ENCODE measurements at regions of chr2 and their contacts with region 1.

Region 1: GRCh38 chr2:118003396-118003824 is 10.5 kb downstream of the CCDC93 start:
- DNase-seq: peak; percentile 88
- H3K4me3 ChIP-seq: no peak overlapping the region
- H3K27ac ChIP-seq: peak overlapping the region; percentile 42
- H3K4me1 ChIP-seq: no peaks in the 10 kb centered on the region
- H3K27me3 ChIP-seq: no peaks in the 10 kb centered on the region
- CTCF ChIP-seq: peak; percentile 74 to 76
- POLR2A ChIP-seq: no peak

Region 2: GRCh38 chr2:117785740-117786139 is 217.7 kb before region 1 on chr2:
- CTCF ChIA-PET with region 1: interaction called, 10 read pairs
- POLR2A ChIA-PET with region 1: no interaction called
- dilution Hi-C with region 1: no loop called
- intact Hi-C with region 1: no loop called
- DNase-seq: peak; percentile 37
- H3K4me3 ChIP-seq: no peak overlapping the region
- H3K27ac ChIP-seq: no peak overlapping the region
- H3K4me1 ChIP-seq: no peaks in the 10 kb centered on the region
- H3K27me3 ChIP-seq: no peaks in the 10 kb centered on the region
- CTCF ChIP-seq: peak; percentile 29 to 47
- POLR2A ChIP-seq: no peak

Region 3: GRCh38 chr2:117835990-117836760 is 167.2 kb before region 1 on chr2:
- CTCF ChIA-PET with region 1: interaction called, 211 read pairs
- POLR2A ChIA-PET with region 1: interaction called, 5 read pairs
- dilution Hi-C with region 1: no loop called
- intact Hi-C with region 1: loop called (anchors 1 kb)
- DNase-seq: peak; percentile 74
- H3K4me3 ChIP-seq: peak overlapping the region; percentile 9 to 62 (median 34)
- H3K27ac ChIP-seq: no peak overlapping the region
- H3K4me1 ChIP-seq: peaks cover 3% of the 10 kb centered on the region
- H3K27me3 ChIP-seq: no peaks in the 10 kb centered on the region
- CTCF ChIP-seq: peak; percentile 96 to 99
- POLR2A ChIP-seq: peak; percentile 12

Region 4: DNA sequence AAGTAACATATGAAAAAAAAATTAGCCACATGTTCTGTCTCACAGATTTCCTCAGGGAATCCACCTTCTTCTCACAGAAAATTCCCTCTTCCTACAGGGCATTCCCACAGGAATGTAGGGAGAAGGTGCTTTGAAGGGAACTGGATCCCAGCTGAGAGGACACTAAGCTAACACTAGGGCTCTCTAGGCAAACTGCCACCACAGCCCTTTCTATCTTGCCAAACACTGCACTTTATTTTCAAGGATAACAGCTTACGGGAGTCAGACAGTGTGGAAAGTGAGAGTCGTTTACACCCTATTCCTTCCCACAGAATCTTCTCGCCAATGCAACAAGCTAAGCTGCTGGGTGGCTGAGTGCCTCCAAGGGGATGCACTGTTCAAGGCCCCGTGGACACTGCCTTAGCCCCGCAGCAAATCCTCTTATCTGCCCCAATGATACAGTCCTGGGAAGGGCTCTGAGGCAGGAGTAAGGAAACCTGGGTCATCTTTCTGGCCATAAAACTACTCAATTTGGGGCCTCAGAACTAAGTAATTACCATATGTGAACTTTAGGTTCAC is 66.5 kb before region 1 on chr2:
- CTCF ChIA-PET with region 1: interaction called, 25 read pairs
- POLR2A ChIA-PET with region 1: no interaction called
- dilution Hi-C with region 1: no loop called
- intact Hi-C with region 1: loop called (anchors 5 kb)
- DNase-seq: no peak
- H3K4me3 ChIP-seq: no peak overlapping the region
- H3K27ac ChIP-seq: no peak overlapping the region
- H3K4me1 ChIP-seq: peaks cover 4% of the 10 kb centered on the region
- H3K27me3 ChIP-seq: no peaks in the 10 kb centered on the region
- CTCF ChIP-seq: no peak
- POLR2A ChIP-seq: no peak

Region 5: DNA sequence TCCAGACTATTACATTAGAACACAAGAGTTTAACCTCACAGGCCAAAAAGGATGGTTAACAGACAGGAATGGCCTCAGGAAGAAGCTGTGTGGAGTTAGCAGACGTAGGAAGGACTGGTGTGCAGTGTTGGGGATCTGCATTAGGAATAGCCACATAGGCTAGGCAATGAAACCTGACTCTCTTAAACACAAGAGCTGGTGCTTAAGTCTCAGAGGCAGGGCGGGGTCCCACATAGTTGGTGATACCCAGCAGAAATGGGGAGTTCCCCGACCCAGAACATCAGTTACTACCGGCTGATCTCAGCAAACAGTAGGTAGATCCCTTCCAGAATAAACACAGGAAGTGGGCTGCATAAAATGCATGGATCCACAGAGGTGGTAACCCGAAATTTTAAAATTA is 53.6 kb before region 1 on chr2:
- CTCF ChIA-PET with region 1: interaction called, 21 read pairs
- POLR2A ChIA-PET with region 1: no interaction called
- dilution Hi-C with region 1: no loop called
- intact Hi-C with region 1: no loop called
- DNase-seq: no peak
- H3K4me3 ChIP-seq: no peak overlapping the region
- H3K27ac ChIP-seq: no peak overlapping the region
- H3K4me1 ChIP-seq: no peaks in the 10 kb centered on the region
- H3K27me3 ChIP-seq: no peaks in the 10 kb centered on the region
- CTCF ChIP-seq: no peak
- POLR2A ChIP-seq: no peak

Region 6: DNA sequence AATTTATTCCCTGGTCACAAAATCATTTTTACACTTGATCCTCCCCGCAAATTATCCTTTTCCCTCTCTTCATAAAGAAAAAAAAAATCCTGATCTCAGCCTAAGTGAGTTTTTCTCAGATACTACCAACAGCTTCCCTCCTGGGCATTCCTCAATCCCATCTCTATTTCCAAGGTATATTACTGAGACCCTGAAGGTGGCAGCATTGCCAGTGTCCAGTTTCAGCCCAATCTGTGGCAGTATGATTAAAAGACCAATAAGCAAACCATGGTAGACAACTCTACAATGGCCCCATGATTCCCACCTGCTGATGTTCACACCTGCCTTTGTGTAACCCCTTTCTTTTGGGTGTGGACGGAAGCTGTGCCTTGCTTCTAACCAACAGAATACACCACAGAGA is 34.7 kb before region 1 on chr2:
- CTCF ChIA-PET with region 1: interaction called, 10 read pairs
- POLR2A ChIA-PET with region 1: interaction called, 3 read pairs
- dilution Hi-C with region 1: no loop called
- intact Hi-C with region 1: no loop called
- DNase-seq: no peak
- H3K4me3 ChIP-seq: no peak overlapping the region
- H3K27ac ChIP-seq: no peak overlapping the region
- H3K4me1 ChIP-seq: no peaks in the 10 kb centered on the region
- H3K27me3 ChIP-seq: no peaks in the 10 kb centered on the region
- CTCF ChIP-seq: no peak
- POLR2A ChIP-seq: no peak

Region 7: DNA sequence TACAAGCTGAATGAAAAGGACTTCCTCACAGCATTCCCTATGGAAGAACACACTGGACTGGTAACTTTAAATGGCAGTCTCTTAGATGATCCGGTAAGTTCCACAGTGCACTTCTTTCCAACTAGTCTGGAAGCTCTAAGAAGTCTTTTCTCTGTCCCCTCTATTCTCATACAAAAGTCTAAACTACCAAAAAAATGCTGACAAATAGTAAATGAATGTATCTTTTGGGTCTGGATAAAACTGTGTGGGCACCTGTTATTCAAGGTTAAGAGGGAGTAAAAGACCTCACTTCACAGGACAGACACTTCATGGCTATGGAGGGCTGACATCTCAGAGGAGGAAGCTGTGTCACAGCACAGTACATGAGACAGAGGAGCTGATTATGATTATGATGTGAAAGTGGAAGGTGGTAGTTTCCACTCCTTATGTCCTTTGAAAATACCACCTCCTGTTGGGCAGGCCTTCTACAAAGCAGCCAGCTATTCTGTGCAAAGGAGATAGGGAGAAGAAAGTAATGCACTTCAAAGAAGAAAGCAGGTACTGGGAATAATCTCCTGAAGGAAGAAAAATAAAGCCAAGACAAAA is 13.5 kb before region 1 on chr2:
- CTCF ChIA-PET with region 1: interaction called, 56 read pairs
- POLR2A ChIA-PET with region 1: no interaction called
- dilution Hi-C with region 1: no loop called
- intact Hi-C with region 1: no loop called
- DNase-seq: no peak
- H3K4me3 ChIP-seq: no peak overlapping the region
- H3K27ac ChIP-seq: no peak overlapping the region
- H3K4me1 ChIP-seq: no peaks in the 10 kb centered on the region
- H3K27me3 ChIP-seq: no peaks in the 10 kb centered on the region
- CTCF ChIP-seq: no peak
- POLR2A ChIP-seq: no peak

Region 8: DNA sequence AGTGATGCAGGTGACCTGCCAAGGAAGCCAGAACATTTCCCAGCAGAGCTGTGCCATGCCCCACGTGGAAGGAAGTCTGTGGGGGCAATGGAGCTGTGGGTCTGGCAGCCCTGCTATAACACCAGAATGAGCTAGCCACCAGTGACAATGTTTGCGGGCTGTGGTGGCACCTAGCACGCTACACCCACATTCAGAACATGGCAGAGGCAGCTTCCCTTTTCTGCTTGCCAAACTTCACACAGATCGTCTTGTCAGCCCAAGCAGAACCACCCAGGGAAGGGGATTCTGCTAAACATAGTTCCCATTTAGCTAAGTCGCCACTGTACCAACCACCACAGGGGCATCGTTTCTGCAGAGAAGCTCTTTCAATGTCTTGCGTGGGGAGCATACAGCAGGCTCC is 37.5 kb after region 1 on chr2:
- CTCF ChIA-PET with region 1: no interaction called
- POLR2A ChIA-PET with region 1: no interaction called
- dilution Hi-C with region 1: no loop called
- intact Hi-C with region 1: no loop called
- DNase-seq: no peak
- H3K4me3 ChIP-seq: no peak overlapping the region
- H3K27ac ChIP-seq: no peak overlapping the region
- H3K4me1 ChIP-seq: no peaks in the 10 kb centered on the region
- H3K27me3 ChIP-seq: peaks cover 12 to 24% of the 10 kb centered on the region in 2 experiments
- CTCF ChIP-seq: no peak
- POLR2A ChIP-seq: no peak

Measured in endothelial cell of umbilical vein (primary cell).